ENCODE measurements at regions of chr10 and their contacts with region 1.

Region 1: DNA sequence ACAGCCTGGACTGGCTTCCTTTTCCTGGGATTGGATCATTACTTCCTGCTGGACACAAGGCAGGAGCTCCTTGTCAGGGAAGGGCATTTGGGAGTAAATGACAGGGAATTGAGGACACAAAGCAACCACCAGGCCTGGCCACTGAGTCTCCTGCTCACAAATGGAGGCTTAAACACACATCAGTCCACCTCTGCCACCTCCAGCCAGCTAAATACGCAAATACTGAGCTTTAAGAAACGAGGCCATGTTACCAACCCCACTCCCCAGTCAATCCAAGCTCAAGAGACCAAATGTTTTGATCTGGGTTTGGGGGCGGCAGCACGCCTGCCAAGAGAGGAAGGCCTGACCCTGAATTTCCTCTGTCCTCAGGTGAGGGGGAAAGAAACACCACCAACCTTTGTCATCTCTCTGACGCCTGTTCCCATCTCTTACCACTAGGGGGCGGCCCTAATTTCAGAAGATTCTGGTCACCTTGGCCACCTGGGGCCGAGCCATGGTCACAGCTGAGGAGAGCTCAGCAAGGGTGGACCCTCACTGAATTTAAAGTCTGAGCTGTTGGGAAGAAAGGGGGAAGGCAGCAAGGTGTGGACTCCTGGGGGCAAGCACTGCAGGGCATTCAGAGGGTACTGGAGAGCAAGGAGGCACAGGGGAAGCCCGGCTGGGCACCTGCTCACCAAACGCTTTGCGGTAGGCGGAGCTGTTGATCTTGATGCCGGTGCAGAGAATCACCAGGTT is 16.5 kb downstream of the AIFM2 start:
- DNase-seq: peak; percentile 59
- ATAC-seq: peak; percentile 76
- H3K4me3 ChIP-seq: no peak overlapping the region
- H3K27ac ChIP-seq: no peak overlapping the region
- H3K4me1 ChIP-seq: no peaks in the 10 kb centered on the region
- H3K27me3 ChIP-seq: no peaks in the 10 kb centered on the region
- CTCF ChIP-seq: peak; percentile 86
- EP300 ChIP-seq: no peak
- POLR2A ChIP-seq: no peak
- RAD21 ChIP-seq: peak; percentile 23; the same call in 1 of the 2 replicates

Region 2: GRCh38 chr10:70034232-70034631 is 81.9 kb before region 1 on chr10:
- CTCF ChIA-PET with region 1: no interaction called
- POLR2A ChIA-PET with region 1: no interaction called
- in situ Hi-C with region 1: no loop called
- intact Hi-C with region 1: no loop called
- DNase-seq: no peak
- ATAC-seq: no peak
- H3K4me3 ChIP-seq: no peak overlapping the region
- H3K27ac ChIP-seq: no peak overlapping the region
- H3K4me1 ChIP-seq: no peaks in the 10 kb centered on the region
- H3K27me3 ChIP-seq: peaks cover 0 to 8% of the 10 kb centered on the region in 2 experiments; a peak in 2 of 5 replicates
- CTCF ChIP-seq: no peak
- EP300 ChIP-seq: no peak
- POLR2A ChIP-seq: no peak
- RAD21 ChIP-seq: no peak

Region 3: GRCh38 chr10:70084189-70084588 is 31.9 kb before region 1 on chr10:
- CTCF ChIA-PET with region 1: interaction called, 10 read pairs
- POLR2A ChIA-PET with region 1: no interaction called
- in situ Hi-C with region 1: no loop called
- intact Hi-C with region 1: no loop called
- DNase-seq: peak; percentile 32
- ATAC-seq: no peak
- H3K4me3 ChIP-seq: no peak overlapping the region
- H3K27ac ChIP-seq: no peak overlapping the region
- H3K4me1 ChIP-seq: peaks cover 62% of the 10 kb centered on the region
- H3K27me3 ChIP-seq: no peaks in the 10 kb centered on the region
- CTCF ChIP-seq: peak; percentile 60
- EP300 ChIP-seq: no peak
- POLR2A ChIP-seq: no peak
- RAD21 ChIP-seq: no peak; the same call in 1 of the 2 replicates

Region 4: GRCh38 chr10:70132098-70133029 is 16.2 kb after region 1 on chr10 and contains the start of gene AIFM2:
- CTCF ChIA-PET with region 1: interaction called, 4 read pairs
- POLR2A ChIA-PET with region 1: interaction called, 15 read pairs
- in situ Hi-C with region 1: no loop called
- intact Hi-C with region 1: no loop called
- DNase-seq: peak; percentile 80
- ATAC-seq: peak; percentile 81
- H3K4me3 ChIP-seq: peak within 1 kb of the TSS; percentile 77 to 97 (median 94)
- H3K27ac ChIP-seq: peak within 1 kb of the TSS; percentile 97
- H3K4me1 ChIP-seq: peaks cover 62% of the 10 kb centered on the region
- H3K27me3 ChIP-seq: no peaks in the 10 kb centered on the region; a peak in 1 of 5 replicates
- CTCF ChIP-seq: no peak; the same call in none of the 2 replicates
- EP300 ChIP-seq: peak in 1 of 2 experiments; percentile 78; a peak in 2 of 4 replicates
- POLR2A ChIP-seq: peak; percentile 53 to 71; a peak in 3 of 4 replicates
- RAD21 ChIP-seq: peak; percentile 53
- total RNA-seq, gene AIFM2: 20.3 and 29.6 TPM in 2 replicates